ENCODE measurements at regions of chr2 and their contacts with region 1.

Region 1: DNA sequence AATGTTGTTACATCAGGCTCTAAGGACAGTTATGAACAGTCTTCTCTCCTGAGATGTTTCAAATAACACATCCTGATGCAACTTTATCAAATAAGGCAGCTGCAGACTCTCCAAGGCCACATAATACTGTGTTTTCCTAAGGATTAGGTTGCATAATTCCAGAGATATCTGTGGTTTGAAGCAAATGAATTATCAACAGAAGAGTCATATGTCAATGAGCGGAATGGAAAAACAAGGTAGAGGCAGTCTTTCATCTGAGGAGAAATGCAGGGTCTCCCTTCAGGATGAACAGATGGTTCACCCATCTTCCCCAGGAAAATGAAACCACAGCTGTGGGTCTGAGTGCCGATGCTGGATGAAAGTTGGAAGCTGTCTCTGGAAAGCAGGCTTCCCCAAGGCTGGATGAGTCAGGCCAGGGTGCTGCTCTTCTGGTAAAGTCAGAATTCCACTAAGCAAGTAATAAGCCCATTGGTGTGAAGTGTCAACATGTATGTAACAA is 22.2 kb downstream of the LYG1 start:
- DNase-seq: peak; percentile 99
- ATAC-seq: peak; percentile 93
- H3K4me3 ChIP-seq: peak overlapping the region in 2 of 3 experiments; percentile 4 to 49; a peak in 2 of 6 replicates
- H3K27ac ChIP-seq: peak overlapping the region; percentile 64
- H3K4me1 ChIP-seq: peaks cover 39% of the 10 kb centered on the region
- H3K27me3 ChIP-seq: no peaks in the 10 kb centered on the region
- CTCF ChIP-seq: no peak
- EP300 ChIP-seq: peak in 1 of 2 experiments; percentile 97; a peak in 2 of 4 replicates
- POLR2A ChIP-seq: no peak
- RAD21 ChIP-seq: no peak

Region 2: GRCh38 chr2:98726205-98726604 is 552.6 kb before region 1 on chr2:
- CTCF ChIA-PET with region 1: no interaction called
- POLR2A ChIA-PET with region 1: no interaction called
- in situ Hi-C with region 1: no loop called
- intact Hi-C with region 1: no loop called
- DNase-seq: no peak
- ATAC-seq: no peak
- H3K4me3 ChIP-seq: no peak overlapping the region
- H3K27ac ChIP-seq: no peak overlapping the region
- H3K4me1 ChIP-seq: peaks cover 71% of the 10 kb centered on the region
- H3K27me3 ChIP-seq: no peaks in the 10 kb centered on the region; a peak in 1 of 5 replicates
- CTCF ChIP-seq: no peak
- EP300 ChIP-seq: no peak
- POLR2A ChIP-seq: no peak
- RAD21 ChIP-seq: no peak

Region 3: GRCh38 chr2:99154643-99155536 is 124.0 kb before region 1 on chr2 and contains the starts of genes LIPT1 and TSGA10:
- CTCF ChIA-PET with region 1: no interaction called
- POLR2A ChIA-PET with region 1: interaction called, 12 read pairs
- in situ Hi-C with region 1: no loop called
- intact Hi-C with region 1: no loop called
- DNase-seq: peak; percentile 93
- ATAC-seq: peak; percentile 97
- H3K4me3 ChIP-seq: peak within 1 kb of the TSS; percentile 80 to 90 (median 85)
- H3K27ac ChIP-seq: peak within 1 kb of the TSS; percentile 79
- H3K4me1 ChIP-seq: peaks cover 44% of the 10 kb centered on the region
- H3K27me3 ChIP-seq: no peaks in the 10 kb centered on the region; a peak in 1 of 5 replicates
- CTCF ChIP-seq: peak; percentile 54
- EP300 ChIP-seq: no peak; a peak in 1 of 4 replicates
- POLR2A ChIP-seq: peak; percentile 93 to 99
- RAD21 ChIP-seq: peak; percentile 50; the same call in 1 of the 2 replicates
- total RNA-seq, gene LIPT1: 8.0 and 8.3 TPM in 2 replicates
- total RNA-seq, gene TSGA10: 13.1 and 15.0 TPM in 2 replicates